Activated T-helper 2 cell treated with anti-CD3 and anti-CD28 coated beads, Interferon-gamma antibody, Interleukin-2, Interleukin-4, amounts not matched to agents 10 μg/mL and 5 μg/mL and 100 μg/mL, durations not matched to agents 14 hours and 24 hours and 36 hours (primary cell): ENCODE measurements at regions of chr5 and their contacts with region 1.

Region 1: DNA sequence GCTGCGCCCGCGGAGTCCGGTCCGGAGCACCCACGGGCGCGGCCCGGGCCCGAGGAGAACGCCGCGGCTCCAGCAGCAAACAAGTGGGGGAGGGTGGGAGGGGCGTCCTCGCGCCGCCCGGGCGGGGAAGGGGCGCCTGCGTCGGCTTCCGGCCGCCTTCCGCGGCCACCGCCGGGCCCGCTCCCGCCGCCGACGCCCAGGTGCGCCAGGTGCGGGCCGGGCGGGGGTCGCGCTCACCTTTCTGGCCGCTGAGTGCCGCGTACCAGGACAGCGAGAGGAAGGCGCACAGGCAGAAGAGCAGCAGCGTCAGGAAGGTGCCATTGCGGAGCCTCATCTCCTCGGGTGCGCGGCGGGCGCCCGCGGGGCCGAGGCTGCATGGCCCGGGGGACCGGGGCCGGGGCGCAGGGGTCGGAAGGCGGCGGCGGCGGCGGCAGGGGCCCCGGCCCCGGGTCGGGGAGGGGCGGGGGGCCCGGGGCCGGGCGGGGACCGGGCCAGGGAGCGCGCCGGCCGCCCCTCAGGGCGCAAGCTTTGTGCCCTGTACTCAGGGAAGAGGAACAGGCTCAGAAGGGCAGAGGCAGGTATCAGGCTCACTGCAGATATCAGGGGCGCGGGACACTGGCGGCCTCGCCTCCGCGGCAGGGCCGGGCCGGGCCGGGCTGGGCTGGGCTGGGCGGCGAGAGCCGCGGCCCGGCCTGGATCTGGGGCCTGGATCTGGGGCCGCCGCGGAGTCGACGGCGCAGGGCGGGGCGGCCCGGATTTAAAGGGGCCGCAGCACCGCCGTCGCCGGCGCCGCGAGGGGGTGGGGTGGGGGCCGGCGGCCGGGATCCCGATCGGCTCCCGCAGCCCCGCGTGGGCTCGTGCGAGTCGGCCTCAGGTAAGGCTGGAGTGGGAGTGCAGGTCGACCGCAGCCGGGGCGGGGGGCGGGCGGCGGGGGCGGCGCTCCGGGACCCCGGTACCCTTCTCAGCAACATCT is at the start of gene MGAT4B:
- DNase-seq: peak; percentile 65
- H3K4me3 Mint-ChIP-seq: peak within 1 kb of the TSS; percentile 77
- H3K27ac Mint-ChIP-seq: peak within 1 kb of the TSS; percentile 72
- H3K4me1 Mint-ChIP-seq: peaks cover 30% of the 10 kb centered on the region
- H3K27me3 Mint-ChIP-seq: no peaks in the 10 kb centered on the region
- total RNA-seq, gene MGAT4B: 135 and 139 TPM in 2 replicates

Region 2: DNA sequence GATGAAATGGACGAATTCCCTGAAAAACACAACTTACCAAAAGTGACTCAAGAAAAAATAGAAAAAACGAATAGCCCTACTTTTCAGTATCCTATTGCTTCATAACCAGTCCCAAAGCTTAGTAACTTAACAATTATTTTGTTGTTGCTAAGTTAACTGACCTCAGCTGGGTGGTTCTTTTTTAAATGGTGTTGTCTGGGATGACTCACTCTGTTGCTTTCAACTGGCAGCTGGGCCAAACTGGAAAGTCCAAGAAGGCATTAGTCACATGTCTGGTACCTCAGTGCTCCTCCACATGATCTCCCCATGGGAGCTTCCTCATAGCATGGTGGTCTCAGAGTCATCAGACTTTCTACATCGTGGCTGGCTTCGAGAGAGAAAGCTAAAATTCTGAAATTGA is 413.5 kb before region 1 on chr5:
- intact Hi-C with region 1: no loop called
- DNase-seq: no peak
- H3K4me3 Mint-ChIP-seq: no peak overlapping the region
- H3K27ac Mint-ChIP-seq: no peak overlapping the region
- H3K4me1 Mint-ChIP-seq: no peaks in the 10 kb centered on the region
- H3K27me3 Mint-ChIP-seq: no peaks in the 10 kb centered on the region

Region 3: GRCh38 chr5:179697993-179698934 is 108.3 kb before region 1 on chr5:
- intact Hi-C with region 1: loop called (anchors 10 kb)
- DNase-seq: peak; percentile 99
- H3K4me3 Mint-ChIP-seq: peak overlapping the region; percentile 99
- H3K27ac Mint-ChIP-seq: peak overlapping the region; percentile 100
- H3K4me1 Mint-ChIP-seq: peaks cover 28% of the 10 kb centered on the region
- H3K27me3 Mint-ChIP-seq: no peaks in the 10 kb centered on the region

Region 4: GRCh38 chr5:179795863-179796833 is 10.4 kb before region 1 on chr5:
- intact Hi-C with region 1: loop called (anchors 1 kb)
- DNase-seq: peak; percentile 63
- H3K4me3 Mint-ChIP-seq: peak overlapping the region; percentile 71
- H3K27ac Mint-ChIP-seq: no peak overlapping the region
- H3K4me1 Mint-ChIP-seq: peaks cover 9% of the 10 kb centered on the region
- H3K27me3 Mint-ChIP-seq: no peaks in the 10 kb centered on the region

Region 5: GRCh38 chr5:179836225-179837019 is 29.9 kb after region 1 on chr5:
- intact Hi-C with region 1: loop called (anchors 5 kb)
- DNase-seq: peak; percentile 64
- H3K4me3 Mint-ChIP-seq: peak overlapping the region; percentile 22
- H3K27ac Mint-ChIP-seq: peak overlapping the region; percentile 89
- H3K4me1 Mint-ChIP-seq: peaks cover 15% of the 10 kb centered on the region
- H3K27me3 Mint-ChIP-seq: no peaks in the 10 kb centered on the region

Region 6: DNA sequence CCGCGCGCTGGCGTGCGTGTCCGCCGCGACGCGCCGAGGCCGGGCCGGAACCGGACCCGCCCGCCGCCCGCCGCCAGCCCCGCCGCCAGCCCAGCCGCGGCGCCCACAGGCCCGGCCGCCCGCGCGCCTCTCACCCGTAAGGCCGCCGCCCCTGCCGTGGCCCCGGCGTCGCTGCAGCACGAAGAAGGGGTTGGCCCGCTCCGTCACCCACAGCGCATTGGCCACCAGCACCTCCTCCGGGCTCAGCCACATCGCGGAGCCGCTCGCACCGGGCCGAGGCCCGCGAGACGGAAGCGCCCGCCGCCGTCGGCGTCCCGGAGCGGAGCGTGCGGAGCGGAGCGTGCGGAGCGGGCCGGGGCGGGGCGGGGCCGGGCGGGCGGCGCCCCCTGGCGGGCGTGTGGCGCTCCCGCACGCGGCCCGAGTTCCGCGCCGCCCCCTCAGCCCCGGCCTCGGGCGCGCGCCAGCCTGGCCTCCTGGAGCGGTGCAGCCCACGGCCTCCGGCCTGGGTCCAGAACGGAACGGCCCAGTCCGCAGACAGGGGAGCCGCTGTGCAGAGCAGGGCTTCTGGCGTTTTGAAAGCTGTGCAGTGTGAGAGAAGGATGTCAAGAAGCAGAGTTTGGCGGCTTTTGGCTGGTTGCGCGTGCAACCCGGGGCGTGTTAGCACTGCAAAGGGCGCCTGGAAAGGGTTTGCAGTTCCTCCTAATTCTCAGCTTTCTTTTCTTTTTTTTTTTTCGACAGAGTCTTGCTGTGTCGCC is 101.2 kb after region 1 on chr5 and contains the start of gene TBC1D9B:
- intact Hi-C with region 1: loop called (anchors 2 kb)
- DNase-seq: peak; percentile 67
- H3K4me3 Mint-ChIP-seq: peak within 1 kb of the TSS; percentile 92
- H3K27ac Mint-ChIP-seq: peak within 1 kb of the TSS; percentile 88
- H3K4me1 Mint-ChIP-seq: peaks cover 10% of the 10 kb centered on the region
- H3K27me3 Mint-ChIP-seq: no peaks in the 10 kb centered on the region
- total RNA-seq, gene TBC1D9B: 124 and 125 TPM in 2 replicates